Heart right ventricle (tissue), 16 donors: ENCODE measurements at regions of chr7 and their contacts with region 1.

Region 1: DNA sequence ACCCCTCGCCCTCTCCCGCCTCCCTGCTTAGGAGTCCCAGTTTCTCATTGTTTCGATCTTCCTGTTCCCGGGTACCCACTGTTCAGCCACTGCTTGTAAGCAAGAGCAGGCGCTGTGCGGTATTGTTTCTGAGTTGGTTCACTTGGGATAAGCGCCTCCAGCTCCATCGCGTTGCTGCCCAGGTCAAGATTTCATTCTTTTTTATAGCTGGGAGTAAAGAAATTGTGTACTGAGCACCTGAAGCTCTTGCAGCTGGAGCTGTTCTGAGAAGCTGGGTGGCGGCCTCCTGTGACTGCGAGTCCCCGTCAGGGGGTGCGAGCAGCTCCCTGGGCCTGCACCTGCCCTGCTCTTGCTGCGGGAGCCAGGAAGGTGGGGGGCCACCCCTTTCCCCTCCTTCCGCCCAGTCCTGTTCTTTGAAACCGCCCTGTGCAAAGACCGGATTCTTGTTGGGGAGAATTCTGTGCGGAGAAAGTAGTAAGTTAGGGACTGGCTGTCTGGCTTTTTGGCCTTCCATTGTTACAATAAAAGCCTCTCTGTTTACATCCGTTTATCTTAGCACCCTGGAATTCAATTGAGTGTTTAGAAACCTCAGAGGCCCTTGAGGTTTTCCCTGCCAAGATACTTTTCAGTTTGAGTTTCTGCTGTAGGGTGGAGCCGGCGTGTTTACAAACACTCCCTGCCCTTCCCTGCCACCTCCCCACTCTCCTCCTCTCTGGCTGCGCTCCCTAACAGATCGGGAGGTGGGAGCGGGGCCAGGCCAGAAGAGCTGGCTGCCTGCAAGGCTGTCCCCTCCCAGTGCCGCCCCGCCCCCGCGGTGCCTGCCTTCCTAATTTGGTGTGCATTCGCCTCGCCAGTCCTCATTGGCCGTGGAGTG is 30.8 kb upstream of the AP5Z1 start:
- DNase-seq: peak; percentile 99 to 100
- ATAC-seq: peak; percentile 93 to 95 (median 94)
- H3K4me3 ChIP-seq: peak overlapping the region in 6 of 10 donors; percentile 24 to 47 (median 37)
- H3K27ac ChIP-seq: peak overlapping the region; percentile 81 to 97 (median 92)
- H3K4me1 ChIP-seq: peaks cover 16 to 74% (median 66%) of the 10 kb centered on the region in 9 donors
- H3K27me3 ChIP-seq: no peaks in the 10 kb centered on the region
- CTCF ChIP-seq: no peak

Region 2: DNA sequence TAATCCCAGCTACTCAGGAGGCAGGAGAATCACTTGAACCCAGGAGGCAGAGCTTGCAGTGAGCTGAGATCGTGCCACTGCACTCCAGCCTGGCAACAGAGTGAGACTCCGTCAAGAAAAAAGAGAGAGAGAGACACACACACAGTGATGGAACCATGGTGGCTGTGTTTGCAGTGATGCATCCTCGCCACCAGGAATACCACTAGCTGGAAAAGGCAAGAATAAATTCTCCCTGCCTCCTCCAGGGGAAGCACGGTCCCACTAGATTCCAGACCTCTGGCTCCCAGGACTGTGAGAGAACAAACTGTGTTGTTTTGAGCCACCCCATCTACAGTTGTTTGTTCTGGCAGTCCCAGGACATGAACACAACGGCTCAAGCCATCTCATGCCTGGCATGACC is 382.9 kb before region 1 on chr7:
- intact Hi-C with region 1: no loop called
- DNase-seq: no peak
- ATAC-seq: no peak
- H3K4me3 ChIP-seq: no peak overlapping the region
- H3K27ac ChIP-seq: no peak overlapping the region
- H3K4me1 ChIP-seq: no peaks in the 10 kb centered on the region
- H3K27me3 ChIP-seq: peaks cover 0 to 12% (median 0%) of the 10 kb centered on the region in 7 donors
- CTCF ChIP-seq: no peak

Region 3: DNA sequence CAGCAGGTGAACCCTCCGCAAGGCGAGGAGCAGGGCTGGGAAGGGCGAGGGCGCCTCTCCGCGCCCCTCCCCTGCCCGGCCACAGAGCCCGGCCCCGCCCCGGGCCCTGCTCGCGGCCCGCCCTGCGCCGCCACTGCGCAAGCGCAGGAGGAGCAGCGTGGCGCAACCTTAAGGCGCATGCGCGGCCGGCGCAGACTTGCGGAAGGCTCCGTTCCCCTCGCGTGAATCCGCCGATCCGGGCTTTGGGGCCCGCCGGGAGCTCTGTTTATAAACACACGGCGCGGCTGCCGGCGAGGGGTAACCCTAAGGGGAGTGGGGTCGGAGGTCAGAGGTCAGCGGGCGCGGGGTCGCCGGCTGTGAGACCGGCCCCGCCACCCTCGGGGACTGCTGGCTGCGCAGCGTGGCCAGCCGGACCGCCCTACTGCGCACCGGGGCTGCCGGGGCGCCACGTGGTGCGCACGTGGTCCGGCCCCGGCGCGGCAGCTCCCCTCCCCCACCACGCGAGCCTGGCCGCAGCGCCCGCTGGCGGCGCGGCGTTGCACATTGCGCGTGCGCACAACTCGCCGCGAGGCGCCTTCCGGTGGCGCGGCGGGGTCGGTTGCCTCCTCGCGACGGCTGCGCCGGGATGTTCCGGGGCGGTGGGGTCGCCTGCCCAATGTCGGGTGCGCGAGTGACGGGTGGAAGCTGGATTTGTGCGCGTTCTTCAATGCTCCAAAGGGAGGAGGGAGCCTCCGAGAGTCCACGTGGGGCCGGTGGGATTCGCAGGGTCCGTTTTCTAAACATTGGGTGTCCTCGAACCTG is 102.8 kb before region 1 on chr7:
- intact Hi-C with region 1: loop called in 3 of 10 experiments (anchors 2 to 5 kb)
- DNase-seq: peak; percentile 94 to 97
- ATAC-seq: peak; percentile 96 to 98 (median 97)
- H3K4me3 ChIP-seq: peak overlapping the region; percentile 15 to 78 (median 64)
- H3K27ac ChIP-seq: peak overlapping the region; percentile 37 to 95 (median 86)
- H3K4me1 ChIP-seq: peaks cover 0 to 16% (median 10%) of the 10 kb centered on the region in 9 donors
- H3K27me3 ChIP-seq: no peaks in the 10 kb centered on the region
- CTCF ChIP-seq: peak; percentile 17 to 81 (median 41)

Region 4: GRCh38 chr7:4667776-4668509 is 76.7 kb before region 1 on chr7:
- intact Hi-C with region 1: no loop called
- DNase-seq: no peak
- ATAC-seq: no peak
- H3K4me3 ChIP-seq: no peak overlapping the region
- H3K27ac ChIP-seq: no peak overlapping the region
- H3K4me1 ChIP-seq: peaks cover 0 to 6% (median 0%) of the 10 kb centered on the region in 9 donors
- H3K27me3 ChIP-seq: no peaks in the 10 kb centered on the region
- CTCF ChIP-seq: no peak

Region 5: GRCh38 chr7:4706384-4707216 is 38.0 kb before region 1 on chr7:
- intact Hi-C with region 1: loop called in 2 of 10 experiments (anchors 5 kb)
- DNase-seq: no peak
- ATAC-seq: peak in 4 of 8 donors; percentile 16 to 27 (median 23)
- H3K4me3 ChIP-seq: peak overlapping the region in 5 of 10 donors; percentile 8 to 18 (median 15)
- H3K27ac ChIP-seq: peak overlapping the region in 9 of 10 donors; percentile 48 to 83 (median 66)
- H3K4me1 ChIP-seq: peaks cover 21 to 87% (median 57%) of the 10 kb centered on the region in 9 donors
- H3K27me3 ChIP-seq: no peaks in the 10 kb centered on the region
- CTCF ChIP-seq: no peak